AG04449 (cell line): ENCODE measurements at regions of chr14 and their contacts with region 1.

Region 1: DNA sequence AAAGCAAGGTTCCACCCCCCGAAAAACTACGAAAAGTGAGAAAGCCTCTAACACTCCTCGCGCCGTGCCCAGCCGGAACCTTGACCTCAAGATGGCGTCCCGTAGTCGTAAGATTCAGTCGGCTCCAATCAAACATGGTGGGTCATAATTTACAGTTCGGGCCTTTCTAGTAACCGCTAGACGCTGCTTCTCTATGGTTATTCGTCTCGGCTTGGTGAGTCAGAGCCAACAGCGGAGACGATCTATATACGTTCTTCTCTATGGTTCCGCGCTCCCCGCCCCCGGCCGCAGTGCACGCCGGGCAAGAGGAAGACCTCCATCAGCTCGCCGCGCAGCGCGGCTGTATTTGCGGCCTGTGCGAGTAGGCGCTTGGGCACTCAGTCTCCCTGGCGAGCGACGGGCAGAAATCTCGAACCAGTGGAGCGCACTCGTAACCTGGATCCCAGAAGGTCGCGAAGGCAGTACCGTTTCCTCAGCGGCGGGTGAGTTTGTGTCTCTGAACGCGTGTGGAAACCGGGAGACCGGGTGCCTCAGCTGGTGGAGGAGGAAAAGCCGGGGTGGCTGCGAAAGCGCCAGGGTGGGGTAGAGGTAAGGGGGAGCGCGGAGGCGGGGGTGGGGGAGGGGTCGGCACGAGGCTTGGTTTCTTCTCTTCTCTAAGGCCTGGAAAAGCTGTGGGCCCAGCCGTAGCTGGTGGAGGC is at the start of gene RBM25:
- DNase-seq: peak; percentile 96
- H3K4me3 ChIP-seq: peak within 1 kb of the TSS; percentile 95
- CTCF ChIP-seq: no peak

Region 2: GRCh38 chr14:73026845-73027542 is 31.4 kb before region 1 on chr14 and contains the start of gene ZFYVE1:
- CTCF ChIA-PET with region 1: no interaction called
- POLR2A ChIA-PET with region 1: interaction called, 13 read pairs
- DNase-seq: peak; percentile 91
- H3K4me3 ChIP-seq: peak within 1 kb of the TSS; percentile 81
- CTCF ChIP-seq: no peak

Region 3: GRCh38 chr14:73091852-73092251 is 33.5 kb after region 1 on chr14:
- CTCF ChIA-PET with region 1: no interaction called
- POLR2A ChIA-PET with region 1: no interaction called
- DNase-seq: no peak
- H3K4me3 ChIP-seq: no peak overlapping the region
- CTCF ChIP-seq: no peak

Region 4: GRCh38 chr14:73216030-73216429 is 157.7 kb after region 1 on chr14:
- CTCF ChIA-PET with region 1: no interaction called
- POLR2A ChIA-PET with region 1: no interaction called
- DNase-seq: no peak
- H3K4me3 ChIP-seq: no peak overlapping the region
- CTCF ChIP-seq: no peak